PC-9 (cell line): ENCODE measurements at regions of chr1 and their contacts with region 1.

Region 1: GRCh38 chr1:26279456-26280332 is at the start of gene SH3BGRL3:
- DNase-seq: peak; percentile 61 to 84
- H3K4me3 ChIP-seq: peak within 1 kb of the TSS; percentile 62
- H3K27ac ChIP-seq: peak within 1 kb of the TSS; percentile 63
- H3K4me1 ChIP-seq: peaks cover 63% of the 10 kb centered on the region
- H3K27me3 ChIP-seq: no peaks in the 10 kb centered on the region
- CTCF ChIP-seq: peak; percentile 32; the same call in 1 of the 2 replicates
- total RNA-seq, gene SH3BGRL3: 168 and 206 TPM in 2 replicates

Region 2: DNA sequence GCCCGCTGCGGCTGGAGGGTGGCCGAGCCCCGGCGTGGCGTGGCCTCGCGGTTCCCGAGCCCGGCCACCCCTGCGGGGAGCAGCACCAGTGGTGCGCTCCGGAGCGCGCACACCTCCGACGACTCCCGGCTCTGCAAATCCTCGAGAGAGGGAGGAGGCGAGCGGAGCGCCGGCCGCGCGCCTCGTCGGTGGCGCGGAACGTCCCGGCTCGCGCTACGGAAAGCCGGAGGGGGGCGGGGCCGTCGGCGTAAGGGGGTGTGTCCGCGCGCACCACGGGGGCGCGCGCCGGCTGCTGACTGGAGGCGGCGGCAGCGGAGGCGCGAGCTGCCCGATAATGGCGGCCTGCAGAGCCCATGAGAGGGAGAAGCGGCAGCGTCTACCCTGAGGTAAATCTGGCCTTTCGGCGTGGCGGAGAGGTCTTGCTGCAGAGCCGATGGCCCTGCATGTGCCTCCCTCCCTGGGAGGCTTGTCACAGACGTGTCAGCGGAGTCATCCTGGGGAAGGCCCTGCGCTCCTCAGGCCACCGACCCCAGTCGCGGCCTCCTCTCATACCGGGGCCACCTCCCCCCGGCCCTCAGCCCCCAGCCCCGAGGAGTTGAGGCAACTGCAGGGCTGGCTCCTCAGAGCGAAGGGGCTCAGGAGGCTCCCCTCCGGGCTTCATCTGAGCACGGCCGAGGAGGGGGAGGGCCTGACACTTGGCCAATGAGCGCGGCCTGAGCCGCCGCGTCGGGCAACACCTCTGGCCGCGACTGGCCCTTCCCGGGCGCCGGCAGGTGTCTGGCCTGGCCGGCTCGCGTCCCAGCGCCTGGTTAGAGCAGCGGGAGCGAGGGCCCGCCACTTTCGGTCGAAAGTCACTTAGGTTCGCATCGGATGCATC is 167.9 kb before region 1 on chr1 and contains the start of gene PDIK1L:
- CTCF ChIA-PET with region 1: no interaction called
- POLR2A ChIA-PET with region 1: no interaction called
- intact Hi-C with region 1: loop called (anchors 5 kb)
- DNase-seq: peak; percentile 81 to 92
- H3K4me3 ChIP-seq: peak within 1 kb of the TSS; percentile 80
- H3K27ac ChIP-seq: peak within 1 kb of the TSS; percentile 58
- H3K4me1 ChIP-seq: peaks cover 24% of the 10 kb centered on the region
- H3K27me3 ChIP-seq: no peaks in the 10 kb centered on the region
- CTCF ChIP-seq: no peak
- total RNA-seq, gene PDIK1L: 7.6 and 8.4 TPM in 2 replicates

Region 3: DNA sequence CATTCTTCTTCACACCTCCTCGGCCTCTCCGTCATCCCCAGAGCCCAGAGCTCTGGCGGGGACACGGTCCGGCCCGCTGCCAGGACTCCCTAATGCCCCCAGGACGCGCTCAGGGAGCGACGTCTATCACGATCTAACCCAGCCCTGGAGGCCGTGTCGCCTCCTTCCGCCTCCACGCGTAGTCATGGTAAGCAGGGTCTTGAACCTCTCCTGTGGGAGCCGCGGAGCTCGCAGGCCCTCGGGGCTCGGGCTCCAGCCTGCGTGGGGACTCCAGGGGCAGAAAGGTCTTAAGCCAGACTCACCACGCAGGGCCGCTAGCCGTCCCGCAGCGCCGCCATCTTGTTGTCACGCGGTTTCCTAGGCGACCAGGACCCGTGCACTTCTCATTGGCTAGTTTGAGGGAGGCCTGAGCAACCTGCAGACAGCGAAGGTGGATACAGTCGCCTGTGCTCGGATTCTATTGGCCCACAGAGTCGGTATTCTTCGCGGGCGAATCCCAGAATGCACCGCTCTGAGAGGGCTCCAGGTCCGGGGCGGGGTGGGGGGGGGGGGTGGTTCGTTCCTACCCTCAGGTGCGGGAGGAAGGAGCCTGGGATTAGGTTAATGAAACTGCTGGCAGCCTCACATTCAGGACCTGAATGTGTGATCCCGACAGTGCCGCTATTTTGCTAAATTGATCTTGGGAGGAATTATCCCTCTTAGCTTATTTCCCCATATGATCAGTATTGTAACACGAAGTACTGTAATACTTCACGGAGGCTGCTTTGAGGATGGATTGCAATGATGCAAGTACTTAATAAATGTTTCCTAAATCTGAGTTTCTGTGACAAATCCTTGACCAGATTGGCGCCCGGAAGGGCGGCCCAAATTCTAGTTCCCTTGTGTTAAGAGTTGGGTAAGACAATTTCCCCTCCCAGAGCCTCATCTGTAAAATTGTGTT is 26.9 kb after region 1 on chr1 and contains the start of gene UBXN11:
- CTCF ChIA-PET with region 1: interaction called, 13 read pairs
- POLR2A ChIA-PET with region 1: interaction called, 5 read pairs
- intact Hi-C with region 1: loop called (anchors 2 kb)
- DNase-seq: peak; percentile 90 to 92
- H3K4me3 ChIP-seq: peak within 1 kb of the TSS; percentile 97
- H3K27ac ChIP-seq: peak within 1 kb of the TSS; percentile 59
- H3K4me1 ChIP-seq: peaks cover 26% of the 10 kb centered on the region
- H3K27me3 ChIP-seq: no peaks in the 10 kb centered on the region
- CTCF ChIP-seq: no peak
- total RNA-seq, gene UBXN11: 57.2 and 59.9 TPM in 2 replicates

Region 4: DNA sequence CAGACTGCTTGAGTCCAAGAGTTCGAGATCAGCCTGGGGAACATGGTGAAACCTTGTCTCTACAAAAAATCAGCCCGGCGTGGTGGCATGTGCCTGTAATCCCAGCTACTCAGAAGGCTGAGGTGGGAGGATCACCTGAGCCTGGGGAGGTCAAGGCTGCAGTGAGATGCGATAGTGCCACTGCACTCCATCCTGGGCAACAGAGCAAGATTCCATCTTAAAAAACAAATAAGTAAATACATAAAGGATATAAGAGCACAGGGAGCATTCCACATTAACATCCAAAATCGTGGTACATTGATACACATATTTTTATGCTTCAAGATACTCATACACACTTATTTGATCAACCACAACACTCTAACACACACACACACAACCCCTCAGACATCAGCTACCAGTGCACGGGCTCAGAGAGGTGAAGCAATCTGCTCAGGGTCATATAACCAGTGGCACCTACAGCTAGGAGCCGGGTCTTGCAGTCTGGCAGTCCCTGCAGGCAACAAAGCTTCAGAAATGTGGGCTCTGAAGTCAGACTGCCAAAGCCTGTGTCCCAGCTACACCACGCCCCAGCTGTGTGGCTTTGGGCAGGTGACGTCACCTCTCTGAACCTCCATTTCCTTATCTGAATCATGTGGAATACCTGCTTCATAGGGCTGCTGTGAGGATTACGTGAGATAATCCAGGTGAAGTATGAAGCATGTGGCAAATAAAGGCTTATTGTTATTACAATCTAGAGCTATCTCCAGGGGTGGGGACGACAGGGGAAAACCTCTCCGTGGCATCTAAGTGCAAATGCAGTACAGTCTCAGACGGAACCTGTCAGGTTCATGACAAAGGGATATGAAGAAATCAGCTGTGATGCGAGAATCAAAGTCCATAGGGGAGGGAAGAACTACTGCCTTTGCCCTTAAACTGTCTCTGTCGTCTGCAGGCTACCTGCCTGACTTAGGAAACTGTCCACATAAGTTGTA is 79.0 kb after region 1 on chr1:
- CTCF ChIA-PET with region 1: interaction called, 5 read pairs
- POLR2A ChIA-PET with region 1: no interaction called
- intact Hi-C with region 1: loop called (anchors 2 kb)
- DNase-seq: peak; percentile 88 to 97
- H3K4me3 ChIP-seq: no peak overlapping the region; the same call in 1 of the 2 replicates
- H3K27ac ChIP-seq: peak overlapping the region; percentile 84
- H3K4me1 ChIP-seq: peaks cover 54% of the 10 kb centered on the region
- H3K27me3 ChIP-seq: no peaks in the 10 kb centered on the region
- CTCF ChIP-seq: no peak

Region 5: GRCh38 chr1:27154991-27155781 is 875.5 kb after region 1 on chr1 and contains the start of gene SLC9A1:
- CTCF ChIA-PET with region 1: no interaction called
- POLR2A ChIA-PET with region 1: no interaction called
- intact Hi-C with region 1: no loop called
- DNase-seq: peak; percentile 91 to 92
- H3K4me3 ChIP-seq: peak within 1 kb of the TSS; percentile 76
- H3K27ac ChIP-seq: peak within 1 kb of the TSS; percentile 80
- H3K4me1 ChIP-seq: peaks cover 34% of the 10 kb centered on the region
- H3K27me3 ChIP-seq: no peaks in the 10 kb centered on the region
- CTCF ChIP-seq: peak; percentile 64
- total RNA-seq, gene SLC9A1: 17.9 and 27.5 TPM in 2 replicates